Activated T-helper 2 cell treated with anti-CD3 and anti-CD28 coated beads, Interferon-gamma antibody, Interleukin-2, Interleukin-4, amounts not matched to agents 10 μg/mL and 5 μg/mL and 100 μg/mL, durations not matched to agents 14 hours and 24 hours and 36 hours (primary cell): ENCODE measurements at regions of chr6 and their contacts with region 1.

Region 1: GRCh38 chr6:107957909-107958688 is at the start of gene SEC63:
- DNase-seq: peak; percentile 97
- H3K4me3 Mint-ChIP-seq: peak within 1 kb of the TSS; percentile 93
- H3K27ac Mint-ChIP-seq: peak within 1 kb of the TSS; percentile 93
- H3K4me1 Mint-ChIP-seq: peaks cover 18% of the 10 kb centered on the region
- H3K27me3 Mint-ChIP-seq: peaks cover 4% of the 10 kb centered on the region
- total RNA-seq, gene SEC63: 92.3 and 96.2 TPM in 2 replicates

Region 2: GRCh38 chr6:107459283-107460082 is 498.6 kb before region 1 on chr6 and contains the start of gene PDSS2:
- intact Hi-C with region 1: loop called (anchors 5 kb)
- DNase-seq: peak; percentile 96
- H3K4me3 Mint-ChIP-seq: peak within 1 kb of the TSS; percentile 95
- H3K27ac Mint-ChIP-seq: peak within 1 kb of the TSS; percentile 88
- H3K4me1 Mint-ChIP-seq: peaks cover 13% of the 10 kb centered on the region
- H3K27me3 Mint-ChIP-seq: peaks cover 2% of the 10 kb centered on the region
- total RNA-seq, gene PDSS2: 13.0 and 14.4 TPM in 2 replicates

Region 3: GRCh38 chr6:107820338-107821261 is 137.5 kb before region 1 on chr6:
- intact Hi-C with region 1: loop called (anchors 1 kb)
- DNase-seq: peak; percentile 26
- H3K4me3 Mint-ChIP-seq: peak overlapping the region; percentile 84
- H3K27ac Mint-ChIP-seq: peak overlapping the region; percentile 86
- H3K4me1 Mint-ChIP-seq: peaks cover 75% of the 10 kb centered on the region
- H3K27me3 Mint-ChIP-seq: no peaks in the 10 kb centered on the region

Region 4: GRCh38 chr6:107866606-107867301 is 91.3 kb before region 1 on chr6:
- intact Hi-C with region 1: loop called (anchors 10 kb)
- DNase-seq: no peak
- H3K4me3 Mint-ChIP-seq: no peak overlapping the region
- H3K27ac Mint-ChIP-seq: no peak overlapping the region
- H3K4me1 Mint-ChIP-seq: peaks cover 12% of the 10 kb centered on the region
- H3K27me3 Mint-ChIP-seq: peaks cover 6% of the 10 kb centered on the region

Region 5: GRCh38 chr6:108074359-108075144 is 116.5 kb after region 1 on chr6 and contains the start of gene OSTM1:
- intact Hi-C with region 1: loop called (anchors 1 kb)
- DNase-seq: peak; percentile 92
- H3K4me3 Mint-ChIP-seq: peak within 1 kb of the TSS; percentile 78
- H3K27ac Mint-ChIP-seq: peak within 1 kb of the TSS; percentile 28
- H3K4me1 Mint-ChIP-seq: peaks cover 18% of the 10 kb centered on the region
- H3K27me3 Mint-ChIP-seq: peaks cover 22% of the 10 kb centered on the region
- total RNA-seq, gene OSTM1: 15.5 and 16.4 TPM in 2 replicates